ENCODE measurements at regions of chr16 and their contacts with region 1.

Region 1: GRCh38 chr16:81486555-81487061 is 42.0 kb downstream of the CMIP start:
- DNase-seq: no peak
- H3K4me3 ChIP-seq: no peak overlapping the region
- H3K27ac ChIP-seq: no peak overlapping the region
- H3K4me1 ChIP-seq: peaks cover 25% of the 10 kb centered on the region
- H3K27me3 ChIP-seq: no peaks in the 10 kb centered on the region
- CTCF ChIP-seq: no peak
- POLR2A ChIP-seq: no peak

Region 2: GRCh38 chr16:81469710-81470535 is 16.7 kb before region 1 on chr16:
- CTCF ChIA-PET with region 1: interaction called, 17 read pairs
- POLR2A ChIA-PET with region 1: interaction called, 4 read pairs
- dilution Hi-C with region 1: no loop called
- intact Hi-C with region 1: no loop called
- DNase-seq: no peak
- H3K4me3 ChIP-seq: no peak overlapping the region
- H3K27ac ChIP-seq: no peak overlapping the region
- H3K4me1 ChIP-seq: peaks cover 22% of the 10 kb centered on the region
- H3K27me3 ChIP-seq: no peaks in the 10 kb centered on the region
- CTCF ChIP-seq: no peak
- POLR2A ChIP-seq: no peak